AG04449 (cell line): ENCODE measurements at regions of chr5 and their contacts with region 1.

Region 1: DNA sequence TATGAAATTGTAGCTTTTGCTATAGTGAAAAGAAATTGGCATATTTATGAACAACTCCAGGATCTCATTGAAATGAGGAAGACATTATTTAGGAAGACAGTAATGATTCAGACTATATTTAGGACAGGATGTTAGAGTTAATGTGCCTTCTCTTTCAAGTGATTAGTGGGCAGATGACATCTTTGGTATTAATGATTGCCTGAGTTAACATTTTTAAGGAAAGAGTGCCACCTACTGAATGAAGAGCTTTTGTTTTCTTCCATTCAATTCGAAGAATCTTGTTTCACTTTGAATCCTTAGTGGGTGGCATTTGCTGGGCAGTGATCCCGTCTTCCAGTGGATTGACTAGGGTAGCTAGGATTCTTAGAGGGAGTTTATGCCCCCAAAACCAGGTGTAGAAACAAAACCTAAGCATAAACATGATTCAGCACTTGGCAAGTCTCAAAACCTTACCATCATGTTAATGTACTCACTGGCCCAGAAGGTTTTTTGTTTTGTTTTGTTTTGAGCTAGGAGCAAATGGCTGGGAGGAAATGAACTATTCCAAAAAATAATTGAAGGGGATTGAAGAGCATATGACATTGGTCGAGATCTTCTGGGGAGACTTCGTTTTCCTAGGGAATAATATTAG is 23.2 kb downstream of the MAP3K1 start:
- DNase-seq: peak; percentile 47
- H3K4me3 ChIP-seq: peak overlapping the region; percentile 21
- CTCF ChIP-seq: peak; percentile 37

Region 2: DNA sequence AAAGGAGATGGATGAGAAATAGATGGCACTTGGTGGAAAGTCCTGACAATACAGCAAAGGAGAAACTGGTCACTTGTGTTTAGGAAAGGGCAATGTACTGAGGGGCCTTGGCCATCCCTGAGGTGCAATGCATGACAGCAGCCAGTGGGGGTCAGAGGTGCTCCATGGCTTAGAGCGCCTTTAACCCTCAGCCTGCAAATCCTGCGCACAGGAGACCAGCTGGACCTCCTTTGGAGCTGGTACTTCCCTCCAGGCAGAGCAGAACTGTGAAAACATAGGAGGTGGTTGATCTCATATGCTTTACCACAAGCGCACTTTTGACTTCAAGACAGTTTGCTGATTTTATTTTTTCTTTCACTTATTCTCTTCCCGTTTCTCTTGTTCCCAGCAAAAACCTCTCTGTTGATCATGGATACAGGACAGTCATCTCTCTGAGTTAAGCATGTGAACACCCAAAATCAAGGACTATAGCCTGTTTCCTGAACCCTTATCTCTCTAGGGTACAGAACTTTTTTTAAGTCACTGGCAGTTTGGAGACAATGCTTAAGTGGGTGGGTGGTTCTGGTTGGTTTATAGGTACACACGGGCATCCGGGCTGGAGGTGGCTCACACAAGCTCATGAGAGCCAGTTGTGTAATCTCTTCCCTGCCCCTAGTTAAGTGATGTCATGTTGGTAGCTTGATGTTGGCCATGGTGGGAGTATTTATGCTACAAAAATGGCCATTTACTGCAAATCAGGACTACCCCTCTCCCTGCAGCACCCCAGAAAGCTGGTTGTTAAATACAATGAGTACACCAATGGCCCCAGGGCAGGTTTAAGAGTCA is 567.7 kb before region 1 on chr5:
- CTCF ChIA-PET with region 1: interaction called, 412 read pairs
- POLR2A ChIA-PET with region 1: interaction called, 5 read pairs
- DNase-seq: peak; percentile 69
- H3K4me3 ChIP-seq: no peak overlapping the region
- CTCF ChIP-seq: peak; percentile 100

Region 3: DNA sequence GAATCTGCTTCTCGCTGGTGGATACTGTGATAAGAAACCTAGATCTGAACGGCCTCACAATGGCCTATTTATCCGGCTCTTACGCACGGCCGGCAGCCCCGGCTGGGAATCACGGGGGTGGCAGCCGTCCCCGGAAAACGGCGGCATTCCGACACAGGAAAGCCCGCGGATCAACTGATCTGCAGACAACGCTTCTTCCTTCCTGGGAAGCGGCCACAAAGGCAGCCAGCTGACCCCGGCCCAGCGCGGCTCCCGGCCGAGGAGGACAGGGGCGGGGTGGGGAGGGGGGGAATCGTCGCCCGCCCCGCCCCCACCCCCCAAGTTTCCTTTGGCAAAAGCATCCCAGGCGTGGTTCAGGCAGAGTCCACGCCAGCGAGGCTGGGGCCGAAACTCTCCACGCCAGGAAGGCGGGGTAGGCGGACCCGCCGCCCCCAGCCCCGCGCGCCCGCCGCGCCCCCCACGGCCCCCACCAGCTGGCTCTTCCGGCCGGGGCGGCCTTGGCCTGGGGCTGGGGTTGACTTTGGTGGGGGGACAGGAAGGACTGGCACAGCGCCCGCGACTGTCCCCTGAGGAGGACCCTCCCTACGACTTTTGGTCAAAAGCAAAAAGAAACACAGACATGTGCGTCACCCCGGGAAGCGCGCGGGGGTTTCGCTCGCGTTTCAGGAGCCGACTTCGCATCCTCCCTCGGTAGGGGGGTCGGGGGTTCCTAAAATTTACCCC is 357.7 kb before region 1 on chr5:
- CTCF ChIA-PET with region 1: interaction called, 10 read pairs
- POLR2A ChIA-PET with region 1: no interaction called
- DNase-seq: no peak
- H3K4me3 ChIP-seq: peak overlapping the region; percentile 60
- CTCF ChIP-seq: no peak

Region 4: DNA sequence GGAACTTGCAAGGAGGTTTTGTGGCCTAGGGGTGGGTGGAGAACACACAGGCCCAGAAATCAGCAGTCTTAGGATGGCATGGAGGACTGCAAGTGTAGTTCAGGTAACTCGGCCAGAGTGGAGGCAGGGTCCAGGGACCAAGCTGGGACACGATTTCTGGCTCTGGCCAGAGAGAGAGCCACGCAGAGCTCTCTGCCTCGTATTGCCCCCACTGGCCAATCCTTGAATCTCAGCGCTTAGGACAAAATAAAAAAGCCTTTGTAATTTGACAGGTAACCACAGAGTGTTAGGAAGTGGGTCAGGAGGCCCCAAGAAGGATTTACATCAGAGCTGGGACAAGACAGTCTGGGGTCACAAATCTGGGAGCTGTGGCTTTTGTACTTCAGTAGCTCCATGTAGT is 11.5 kb before region 1 on chr5:
- CTCF ChIA-PET with region 1: interaction called, 20 read pairs
- POLR2A ChIA-PET with region 1: no interaction called
- DNase-seq: no peak
- H3K4me3 ChIP-seq: no peak overlapping the region
- CTCF ChIP-seq: no peak